B cell (primary cell): ENCODE measurements at regions of chr19 and their contacts with region 1.

Region 1: GRCh38 chr19:36915992-36916830 is at the starts of genes ZNF568 and ZNF829:
- DNase-seq: peak; percentile 96
- ATAC-seq: peak; percentile 89
- H3K4me3 ChIP-seq: peak within 1 kb of the TSS; percentile 77 to 90 (median 86)
- H3K4me3 Mint-ChIP-seq: peak within 1 kb of the TSS; percentile 96
- H3K27ac ChIP-seq: peak within 1 kb of the TSS; percentile 86 to 95
- H3K27ac Mint-ChIP-seq: peak within 1 kb of the TSS; percentile 95
- H3K4me1 ChIP-seq: peaks cover 11 to 12% of the 10 kb centered on the region in 2 donors
- H3K4me1 Mint-ChIP-seq: peaks cover 24% of the 10 kb centered on the region
- H3K27me3 ChIP-seq: no peaks in the 10 kb centered on the region
- H3K27me3 Mint-ChIP-seq: no peaks in the 10 kb centered on the region
- CTCF ChIP-seq: peak; percentile 81
- total RNA-seq, gene ZNF568: 19.4 and 21.1 TPM in 2 replicates
- total RNA-seq, gene ZNF829: 8.4 and 9.6 TPM in 2 replicates

Region 2: DNA sequence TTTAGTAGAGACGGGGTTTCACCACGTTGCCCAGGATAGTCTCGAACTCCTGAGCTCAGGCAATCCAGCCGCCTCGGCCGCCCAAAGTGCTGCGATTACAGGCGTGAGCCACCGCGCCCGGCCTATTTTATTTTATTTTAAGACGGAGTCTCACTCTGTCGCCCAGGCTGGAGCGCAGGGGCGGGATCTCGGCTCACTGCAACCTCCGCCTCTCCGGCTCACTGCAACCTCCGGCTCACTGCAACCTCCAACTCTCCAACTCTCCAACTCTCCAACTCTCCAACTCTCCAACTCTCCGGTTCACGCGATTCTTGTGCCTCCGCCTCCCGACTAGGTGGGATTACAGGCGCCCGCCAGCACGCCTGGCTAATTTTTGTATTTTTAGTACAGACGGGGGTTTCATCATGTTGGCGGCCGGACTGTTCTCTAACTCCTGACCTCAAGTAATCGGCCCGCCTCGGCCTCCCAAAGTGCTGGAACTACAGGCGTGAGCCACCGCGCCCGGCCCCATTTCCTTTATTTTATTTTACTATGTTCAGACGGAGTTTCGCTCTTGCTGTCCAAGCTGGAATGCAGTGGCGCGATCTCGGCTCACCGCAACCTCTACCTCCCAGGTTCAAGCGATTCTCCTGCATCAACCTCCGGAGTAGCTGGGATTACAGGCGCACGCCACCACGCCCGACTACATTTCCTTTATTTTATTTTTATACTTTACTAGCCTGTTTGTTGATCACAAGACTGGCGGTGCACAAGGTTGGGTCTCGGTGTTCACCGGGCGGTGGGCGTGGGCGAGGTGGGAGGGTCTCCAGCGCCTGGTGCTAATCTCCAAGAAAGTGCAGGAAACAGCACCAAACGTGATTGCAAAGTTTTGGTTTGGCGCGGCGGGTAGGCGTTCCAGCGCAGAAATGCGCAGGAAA is 119.9 kb before region 1 on chr19:
- CTCF ChIA-PET with region 1: no interaction called
- POLR2A ChIA-PET with region 1: no interaction called
- intact Hi-C with region 1: loop called (anchors 1 kb)
- DNase-seq: no peak
- ATAC-seq: no peak
- H3K4me3 ChIP-seq: peak overlapping the region; percentile 63 to 91 (median 84)
- H3K4me3 Mint-ChIP-seq: peak overlapping the region; percentile 95
- H3K27ac ChIP-seq: peak overlapping the region; percentile 86 to 90
- H3K27ac Mint-ChIP-seq: peak overlapping the region; percentile 99
- H3K4me1 ChIP-seq: peaks cover 0 to 17% of the 10 kb centered on the region in 2 donors
- H3K4me1 Mint-ChIP-seq: peaks cover 25% of the 10 kb centered on the region
- H3K27me3 ChIP-seq: peaks cover 0 to 6% (median 0%) of the 10 kb centered on the region in 4 experiments
- H3K27me3 Mint-ChIP-seq: peaks cover 7% of the 10 kb centered on the region
- CTCF ChIP-seq: no peak

Region 3: DNA sequence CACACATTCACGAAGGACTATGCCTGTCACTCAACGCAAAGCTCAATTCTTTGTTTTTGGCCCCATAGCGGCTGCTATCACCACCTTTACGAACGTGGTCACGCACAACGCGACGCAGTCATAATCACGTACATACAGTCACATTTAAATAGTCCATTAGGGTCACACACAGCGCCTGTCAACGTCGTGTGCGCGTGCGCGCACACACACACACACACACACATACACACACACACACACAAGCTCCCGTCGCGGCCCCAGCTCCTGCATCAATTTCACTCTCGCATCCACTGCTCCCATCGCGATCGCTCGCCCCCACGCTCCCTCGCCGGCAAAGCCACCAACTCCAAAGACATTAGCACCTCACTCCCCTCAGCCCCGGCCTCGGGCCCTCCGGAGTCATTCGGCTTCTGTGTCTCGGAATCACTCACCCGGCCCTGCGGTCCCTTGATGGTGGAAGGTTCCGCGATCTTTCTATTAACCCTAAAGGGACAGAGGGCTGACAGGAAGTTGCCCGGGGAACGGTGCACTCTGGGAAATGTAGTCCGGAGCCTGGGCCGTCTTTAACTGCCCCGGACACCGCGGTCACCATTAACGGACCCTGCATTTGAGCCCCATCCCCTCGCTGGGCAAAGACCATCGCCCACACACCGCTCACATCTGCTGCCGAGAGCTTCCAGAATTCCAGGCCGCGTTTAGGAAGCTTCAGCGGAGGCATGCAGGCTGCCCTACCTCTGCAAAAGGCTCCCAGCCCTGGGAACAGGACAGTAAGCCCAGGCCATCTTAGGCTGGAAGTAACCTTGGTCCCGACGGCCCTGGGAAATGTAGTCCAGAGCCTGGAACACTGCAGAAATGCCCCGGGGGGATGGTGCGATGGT is 78.1 kb before region 1 on chr19 and contains the start of gene ZNF790:
- CTCF ChIA-PET with region 1: no interaction called
- POLR2A ChIA-PET with region 1: no interaction called
- intact Hi-C with region 1: loop called (anchors 5 kb)
- DNase-seq: peak; percentile 94
- ATAC-seq: peak; percentile 90
- H3K4me3 ChIP-seq: peak within 1 kb of the TSS; percentile 79 to 90 (median 83)
- H3K4me3 Mint-ChIP-seq: no peak within 1 kb of the TSS
- H3K27ac ChIP-seq: peak within 1 kb of the TSS; percentile 84 to 89
- H3K27ac Mint-ChIP-seq: no peak within 1 kb of the TSS
- H3K4me1 ChIP-seq: peaks cover 10 to 18% of the 10 kb centered on the region in 2 donors
- H3K4me1 Mint-ChIP-seq: no peaks in the 10 kb centered on the region
- H3K27me3 ChIP-seq: no peaks in the 10 kb centered on the region
- H3K27me3 Mint-ChIP-seq: no peaks in the 10 kb centered on the region
- CTCF ChIP-seq: no peak
- total RNA-seq, gene ZNF790: 14.8 and 15.1 TPM in 2 replicates

Region 4: GRCh38 chr19:36973021-36973843 is 57.0 kb after region 1 on chr19:
- CTCF ChIA-PET with region 1: interaction called, 3 read pairs
- POLR2A ChIA-PET with region 1: no interaction called
- intact Hi-C with region 1: loop called (anchors 1 kb)
- DNase-seq: peak; percentile 92
- ATAC-seq: peak; percentile 97
- H3K4me3 ChIP-seq: peak overlapping the region; percentile 52 to 92 (median 79)
- H3K4me3 Mint-ChIP-seq: peak overlapping the region; percentile 97
- H3K27ac ChIP-seq: peak overlapping the region; percentile 49 to 71
- H3K27ac Mint-ChIP-seq: peak overlapping the region; percentile 91
- H3K4me1 ChIP-seq: peaks cover 11 to 16% of the 10 kb centered on the region in 2 donors
- H3K4me1 Mint-ChIP-seq: peaks cover 13% of the 10 kb centered on the region
- H3K27me3 ChIP-seq: no peaks in the 10 kb centered on the region
- H3K27me3 Mint-ChIP-seq: no peaks in the 10 kb centered on the region
- CTCF ChIP-seq: peak; percentile 78

Region 5: GRCh38 chr19:37172368-37173366 is 256.5 kb after region 1 on chr19 and contains the start of gene ZNF585A:
- CTCF ChIA-PET with region 1: no interaction called
- POLR2A ChIA-PET with region 1: no interaction called
- intact Hi-C with region 1: loop called (anchors 5 kb)
- DNase-seq: peak; percentile 96
- ATAC-seq: peak; percentile 100
- H3K4me3 ChIP-seq: peak within 1 kb of the TSS; percentile 72 to 96 (median 82)
- H3K4me3 Mint-ChIP-seq: no peak within 1 kb of the TSS
- H3K27ac ChIP-seq: peak within 1 kb of the TSS; percentile 70 to 89
- H3K27ac Mint-ChIP-seq: no peak within 1 kb of the TSS
- H3K4me1 ChIP-seq: peaks cover 5 to 7% of the 10 kb centered on the region in 2 donors
- H3K4me1 Mint-ChIP-seq: peaks cover 3% of the 10 kb centered on the region
- H3K27me3 ChIP-seq: no peaks in the 10 kb centered on the region
- H3K27me3 Mint-ChIP-seq: no peaks in the 10 kb centered on the region
- CTCF ChIP-seq: peak; percentile 23
- total RNA-seq, gene ZNF585A: 20.0 and 22.0 TPM in 2 replicates